ENCODE measurements at regions of chr16 and their contacts with region 1.

Region 1: GRCh38 chr16:4358831-4359561 is 7.9 kb upstream of the PAM16 start:
- DNase-seq: no peak
- H3K4me3 ChIP-seq: no peak overlapping the region
- H3K27ac ChIP-seq: no peak overlapping the region
- H3K4me1 ChIP-seq: peaks cover 0 to 11% (median 0%) of the 10 kb centered on the region in 3 donors
- H3K27me3 ChIP-seq: no peaks in the 10 kb centered on the region
- CTCF ChIP-seq: peak; percentile 81 to 97 (median 96)
- POLR2A ChIP-seq: no peak

Region 2: GRCh38 chr16:4402439-4403132 is 43.6 kb after region 1 on chr16:
- intact Hi-C with region 1: loop called (anchors 5 kb)
- DNase-seq: no peak
- H3K4me3 ChIP-seq: peak overlapping the region in 1 of 4 donors; percentile 28
- H3K27ac ChIP-seq: no peak overlapping the region
- H3K4me1 ChIP-seq: peaks cover 0 to 10% (median 0%) of the 10 kb centered on the region in 3 donors
- H3K27me3 ChIP-seq: no peaks in the 10 kb centered on the region
- CTCF ChIP-seq: peak; percentile 89 to 95 (median 92)
- POLR2A ChIP-seq: no peak

Measured in esophagus squamous epithelium (tissue), 5 donors.